CD14-positive monocyte (primary cell): ENCODE measurements at regions of chr11 and their contacts with region 1.

Region 1: DNA sequence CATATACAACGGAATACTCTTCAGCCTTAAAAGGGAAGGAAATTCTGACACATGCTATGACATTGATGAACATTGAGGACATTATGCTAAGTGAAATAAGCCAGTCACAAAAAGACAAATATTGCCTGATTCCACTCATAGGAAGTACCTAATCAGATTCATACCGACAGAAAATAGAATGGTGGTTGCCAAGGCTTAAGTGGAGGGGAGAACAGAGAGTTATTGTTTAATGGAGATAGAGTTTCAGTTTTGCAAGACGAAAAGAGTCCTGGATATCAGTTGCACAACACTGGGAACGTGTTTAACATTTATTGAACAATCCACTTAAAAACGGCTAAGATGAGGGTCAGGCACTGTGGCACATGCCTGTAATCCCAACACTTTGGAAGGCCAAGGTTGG is 45.6 kb upstream of the HIPK3 start:
- DNase-seq: peak; percentile 61 to 87 (median 83)
- H3K4me3 ChIP-seq: peak overlapping the region; percentile 33 to 62 (median 36)
- H3K4me3 Mint-ChIP-seq: peak overlapping the region; percentile 60 to 79
- H3K27ac ChIP-seq: peak overlapping the region; percentile 90 to 96
- H3K27ac Mint-ChIP-seq: peak overlapping the region; percentile 94 to 99 (median 97)
- H3K4me1 ChIP-seq: peaks cover 74 to 84% of the 10 kb centered on the region in 2 donors
- H3K4me1 Mint-ChIP-seq: peaks cover 59% of the 10 kb centered on the region
- H3K27me3 ChIP-seq: no peaks in the 10 kb centered on the region
- H3K27me3 Mint-ChIP-seq: peaks cover 0 to 2% (median 0%) of the 10 kb centered on the region in 3 donors
- CTCF ChIP-seq: no peak

Region 2: GRCh38 chr11:33195462-33196173 is 16.0 kb before region 1 on chr11:
- intact Hi-C with region 1: loop called in 1 of 2 experiments (anchors 2 kb)
- DNase-seq: peak; percentile 86 to 93 (median 92)
- H3K4me3 ChIP-seq: peak overlapping the region in 1 of 3 experiments; percentile 32
- H3K4me3 Mint-ChIP-seq: no peak overlapping the region
- H3K27ac ChIP-seq: peak overlapping the region; percentile 83 to 93
- H3K27ac Mint-ChIP-seq: peak overlapping the region; percentile 94 to 98 (median 96)
- H3K4me1 ChIP-seq: peaks cover 74 to 79% of the 10 kb centered on the region in 2 donors
- H3K4me1 Mint-ChIP-seq: peaks cover 62% of the 10 kb centered on the region
- H3K27me3 ChIP-seq: no peaks in the 10 kb centered on the region
- H3K27me3 Mint-ChIP-seq: peaks cover 0 to 1% (median 0%) of the 10 kb centered on the region in 3 donors
- CTCF ChIP-seq: no peak

Region 3: GRCh38 chr11:34407121-34407786 is 1195.7 kb after region 1 on chr11:
- intact Hi-C with region 1: no loop called
- DNase-seq: no peak
- H3K4me3 ChIP-seq: no peak overlapping the region
- H3K4me3 Mint-ChIP-seq: no peak overlapping the region
- H3K27ac ChIP-seq: no peak overlapping the region
- H3K27ac Mint-ChIP-seq: no peak overlapping the region
- H3K4me1 ChIP-seq: peaks cover 8 to 18% of the 10 kb centered on the region in 2 donors
- H3K4me1 Mint-ChIP-seq: peaks cover 27% of the 10 kb centered on the region
- H3K27me3 ChIP-seq: no peaks in the 10 kb centered on the region
- H3K27me3 Mint-ChIP-seq: peaks cover 0 to 1% (median 0%) of the 10 kb centered on the region in 3 donors
- CTCF ChIP-seq: no peak